Activated CD4-positive, alpha-beta T cell treated with anti-CD3 and anti-CD28 coated beads for 36 hours (primary cell): ENCODE measurements at regions of chr1 and their contacts with region 1.

Region 1: DNA sequence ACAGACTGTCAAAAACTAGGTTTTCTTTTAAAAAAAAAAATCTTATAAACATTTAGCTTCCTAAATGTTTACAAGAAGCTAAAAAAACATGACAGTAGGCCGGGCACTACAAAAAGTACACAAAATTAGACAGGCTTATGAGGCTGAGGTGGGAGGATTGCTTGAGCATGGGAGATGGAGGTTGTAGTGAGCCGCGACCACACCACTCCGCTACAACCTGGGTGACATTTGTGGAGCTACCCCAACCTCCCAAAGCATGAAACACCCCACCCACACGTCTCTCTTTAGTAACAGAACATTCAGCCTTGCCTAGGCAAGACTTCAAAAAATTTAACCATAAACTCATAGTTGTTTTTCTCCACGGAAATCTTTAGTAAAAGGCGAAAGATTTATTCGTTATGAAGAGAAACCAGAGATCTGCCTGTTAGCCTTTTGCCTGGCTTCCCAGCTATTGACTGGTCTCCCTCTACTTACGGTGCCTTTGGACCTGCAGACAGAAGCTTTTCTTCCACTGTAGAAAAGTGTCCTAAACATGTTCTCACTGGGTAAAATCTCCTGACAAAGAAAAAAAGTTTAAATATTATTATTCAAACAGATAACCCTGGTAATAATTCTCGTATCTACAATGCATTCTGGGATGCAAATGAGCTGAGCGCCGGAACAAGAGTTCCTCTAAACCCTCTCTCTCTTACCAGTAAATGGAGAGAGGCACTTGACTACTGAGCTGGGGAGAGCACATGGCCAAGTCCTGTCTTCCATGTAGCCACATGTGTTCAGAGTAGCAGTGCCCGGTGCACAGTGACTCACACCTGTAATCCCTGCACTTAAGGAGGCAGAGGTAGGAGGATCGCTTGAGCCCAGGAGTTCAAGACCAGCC is 9.2 kb downstream of the RNU5D-1 start:
- DNase-seq: peak; percentile 89
- ATAC-seq: peak; percentile 85
- H3K4me3 Mint-ChIP-seq: peak overlapping the region; percentile 66
- H3K27ac Mint-ChIP-seq: peak overlapping the region; percentile 96
- H3K4me1 Mint-ChIP-seq: peaks cover 80% of the 10 kb centered on the region
- H3K27me3 Mint-ChIP-seq: no peaks in the 10 kb centered on the region

Region 2: GRCh38 chr1:44674113-44675000 is 47.4 kb before region 1 on chr1 and contains the starts of genes ARMH1 and TMEM53:
- CTCF ChIA-PET with region 1: interaction called, 5 read pairs
- POLR2A ChIA-PET with region 1: interaction called, 23 read pairs
- intact Hi-C with region 1: loop called in 1 of 2 experiments (anchors 2 kb)
- DNase-seq: peak; percentile 99
- ATAC-seq: peak; percentile 97
- H3K4me3 Mint-ChIP-seq: peak within 1 kb of the TSS; percentile 78
- H3K27ac Mint-ChIP-seq: peak within 1 kb of the TSS; percentile 84
- H3K4me1 Mint-ChIP-seq: peaks cover 24% of the 10 kb centered on the region
- H3K27me3 Mint-ChIP-seq: no peaks in the 10 kb centered on the region
- total RNA-seq, gene ARMH1: 67.3 to 75.1 TPM
- total RNA-seq, gene TMEM53: 4.3 to 5.5 TPM

Region 3: DNA sequence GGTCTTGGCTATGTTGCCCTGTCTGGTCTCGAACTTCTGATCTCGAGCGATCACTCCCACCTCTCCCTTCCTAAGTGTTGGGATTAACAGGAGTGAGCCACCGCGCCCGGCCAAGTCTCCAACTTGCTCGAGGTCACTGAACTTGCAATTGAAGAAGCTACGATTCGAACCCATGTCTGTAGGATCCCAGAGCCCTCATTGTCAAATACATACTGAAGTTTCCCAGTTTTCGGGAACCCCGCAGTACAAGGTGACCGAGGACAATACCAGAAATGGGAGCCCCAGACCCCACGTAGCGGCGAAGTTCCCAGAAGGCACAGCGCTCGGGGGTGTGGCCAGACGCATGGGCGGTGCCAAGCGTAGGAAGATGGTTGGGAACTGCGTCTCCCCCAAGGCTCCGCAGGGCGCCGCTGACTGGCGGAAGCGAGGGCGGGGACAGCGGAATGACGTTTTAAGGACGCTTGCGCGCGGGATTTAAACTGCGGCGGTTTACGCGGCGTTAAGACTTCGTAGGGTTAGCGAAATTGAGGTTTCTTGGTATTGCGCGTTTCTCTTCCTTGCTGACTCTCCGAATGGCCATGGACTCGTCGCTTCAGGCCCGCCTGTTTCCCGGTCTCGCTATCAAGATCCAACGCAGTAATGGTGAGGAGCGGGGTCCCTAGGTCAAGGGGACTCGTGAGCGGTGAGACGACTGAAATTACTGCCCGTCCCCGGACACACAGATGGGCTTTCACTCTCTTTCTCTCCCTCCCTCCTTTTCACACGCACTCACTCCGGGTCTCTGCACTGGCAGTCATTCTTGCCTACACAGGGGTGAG is 17.8 kb after region 1 on chr1 and contains the start of gene KIF2C:
- CTCF ChIA-PET with region 1: interaction called, 4 read pairs
- POLR2A ChIA-PET with region 1: interaction called, 17 read pairs
- intact Hi-C with region 1: loop called (anchors 1 to 2 kb)
- DNase-seq: peak; percentile 99
- ATAC-seq: peak; percentile 98
- H3K4me3 Mint-ChIP-seq: peak within 1 kb of the TSS; percentile 98
- H3K27ac Mint-ChIP-seq: peak within 1 kb of the TSS; percentile 94
- H3K4me1 Mint-ChIP-seq: peaks cover 26% of the 10 kb centered on the region
- H3K27me3 Mint-ChIP-seq: no peaks in the 10 kb centered on the region
- total RNA-seq, gene KIF2C: 101 to 119 TPM

Region 4: DNA sequence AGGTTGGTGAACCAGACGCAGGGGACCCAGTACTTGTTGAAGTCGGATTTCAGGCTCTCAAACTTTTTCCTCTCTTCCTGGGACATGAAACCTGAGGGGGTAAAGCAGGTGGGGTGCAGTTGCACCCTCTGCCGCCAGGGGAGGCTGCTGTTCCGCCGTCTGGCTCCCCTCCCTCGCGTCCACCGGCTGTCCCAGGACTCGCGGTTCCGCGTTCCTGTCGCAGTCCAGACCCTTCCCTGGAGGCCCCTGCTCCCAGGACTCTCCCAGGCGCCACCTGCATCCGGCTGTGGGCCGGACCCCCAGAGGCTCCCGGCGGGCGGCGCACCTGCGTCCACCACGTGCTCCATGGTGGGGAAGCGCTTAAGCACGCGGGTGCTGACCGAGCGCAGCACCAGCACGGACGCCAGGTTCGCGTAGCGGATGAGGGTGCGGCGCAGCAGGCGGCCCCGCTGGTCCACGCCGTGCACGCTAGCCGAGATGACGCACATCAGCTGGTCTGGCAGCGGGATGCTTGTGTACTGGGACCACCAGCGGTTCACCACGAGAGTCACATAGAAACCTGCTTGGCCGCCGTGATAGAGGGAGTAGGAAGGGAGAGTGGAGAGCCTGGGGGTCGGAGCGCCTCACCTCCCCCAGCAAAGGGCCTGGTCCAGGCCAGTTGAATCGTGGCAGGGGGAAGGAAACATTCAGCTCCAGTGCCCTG is 64.6 kb after region 1 on chr1:
- CTCF ChIA-PET with region 1: interaction called, 4 read pairs
- POLR2A ChIA-PET with region 1: interaction called, 16 read pairs
- intact Hi-C with region 1: no loop called
- DNase-seq: peak; percentile 85
- ATAC-seq: peak; percentile 73
- H3K4me3 Mint-ChIP-seq: peak overlapping the region; percentile 66
- H3K27ac Mint-ChIP-seq: peak overlapping the region; percentile 69
- H3K4me1 Mint-ChIP-seq: peaks cover 31% of the 10 kb centered on the region
- H3K27me3 Mint-ChIP-seq: no peaks in the 10 kb centered on the region

Region 5: DNA sequence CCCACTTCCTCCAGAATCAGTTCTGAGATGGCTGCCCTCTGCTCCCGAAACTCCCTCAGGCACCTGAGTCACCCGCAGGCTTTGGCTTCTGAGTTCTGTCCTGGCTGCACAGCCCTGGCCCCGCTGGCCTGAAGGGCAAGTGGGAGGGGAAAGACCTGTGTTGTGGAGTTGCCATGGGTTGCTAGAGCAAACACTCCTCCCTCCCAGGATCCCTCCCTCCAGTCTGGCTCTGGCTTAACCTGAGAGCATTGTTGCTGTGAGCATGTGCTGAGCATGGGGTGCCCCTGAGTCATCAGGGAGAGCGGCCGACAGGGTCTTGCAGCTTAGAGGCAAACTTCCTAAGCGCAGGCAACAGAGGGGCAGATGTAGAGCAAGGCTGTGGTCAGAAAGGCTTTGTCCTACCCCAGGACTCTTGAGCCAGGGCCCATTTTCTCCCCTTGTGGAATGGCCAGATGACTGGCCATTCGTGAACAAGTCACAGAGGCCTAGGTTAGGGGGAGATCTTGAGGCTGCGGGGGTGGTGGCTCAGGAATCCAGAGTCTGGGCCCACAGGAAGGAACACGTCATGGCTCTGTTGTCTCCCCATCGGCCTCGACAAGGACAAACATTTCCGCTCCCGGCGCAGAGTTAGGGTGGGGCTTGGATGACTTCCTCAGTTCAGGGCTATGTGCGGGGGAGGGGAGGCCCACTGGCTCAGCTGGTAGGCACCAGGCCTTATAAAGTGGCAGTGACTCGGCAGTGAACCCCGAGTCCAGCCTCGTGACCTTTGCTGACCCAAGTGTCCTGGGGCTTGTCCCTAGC is 85.7 kb after region 1 on chr1 and contains the start of gene DYNLT4:
- CTCF ChIA-PET with region 1: interaction called, 7 read pairs
- POLR2A ChIA-PET with region 1: interaction called, 138 read pairs
- intact Hi-C with region 1: loop called in 1 of 2 experiments (anchors 2 kb)
- DNase-seq: peak; percentile 94
- ATAC-seq: peak; percentile 57
- H3K4me3 Mint-ChIP-seq: peak within 1 kb of the TSS; percentile 87
- H3K27ac Mint-ChIP-seq: peak within 1 kb of the TSS; percentile 99
- H3K4me1 Mint-ChIP-seq: peaks cover 92% of the 10 kb centered on the region
- H3K27me3 Mint-ChIP-seq: no peaks in the 10 kb centered on the region
- total RNA-seq, gene DYNLT4: 0.32 TPM in 1 of 2 experiments, not detected in the other

Region 6: GRCh38 chr1:44870096-44870495 is 148.4 kb after region 1 on chr1:
- CTCF ChIA-PET with region 1: no interaction called
- POLR2A ChIA-PET with region 1: no interaction called
- intact Hi-C with region 1: no loop called
- DNase-seq: no peak
- ATAC-seq: no peak
- H3K4me3 Mint-ChIP-seq: no peak overlapping the region
- H3K27ac Mint-ChIP-seq: no peak overlapping the region
- H3K4me1 Mint-ChIP-seq: no peaks in the 10 kb centered on the region
- H3K27me3 Mint-ChIP-seq: no peaks in the 10 kb centered on the region

Region 7: GRCh38 chr1:44985747-44986359 is 264.1 kb after region 1 on chr1:
- CTCF ChIA-PET with region 1: no interaction called
- POLR2A ChIA-PET with region 1: interaction called, 10 read pairs
- intact Hi-C with region 1: loop called in 1 of 2 experiments (anchors 5 kb)
- DNase-seq: no peak
- ATAC-seq: no peak
- H3K4me3 Mint-ChIP-seq: peak overlapping the region; percentile 96
- H3K27ac Mint-ChIP-seq: peak overlapping the region; percentile 87
- H3K4me1 Mint-ChIP-seq: peaks cover 22% of the 10 kb centered on the region
- H3K27me3 Mint-ChIP-seq: no peaks in the 10 kb centered on the region

Region 8: GRCh38 chr1:46581681-46582455 is 1860.1 kb after region 1 on chr1:
- CTCF ChIA-PET with region 1: no interaction called
- POLR2A ChIA-PET with region 1: no interaction called
- intact Hi-C with region 1: no loop called
- DNase-seq: peak; percentile 26
- ATAC-seq: peak; percentile 95
- H3K4me3 Mint-ChIP-seq: no peak overlapping the region
- H3K27ac Mint-ChIP-seq: peak overlapping the region; percentile 91
- H3K4me1 Mint-ChIP-seq: peaks cover 21% of the 10 kb centered on the region
- H3K27me3 Mint-ChIP-seq: no peaks in the 10 kb centered on the region